ENCODE measurements at regions of chr15 and their contacts with region 1.

Region 1: GRCh38 chr15:42533246-42533645 is 15.3 kb downstream of the LRRC57 start:
- DNase-seq: no peak
- H3K4me3 ChIP-seq: no peak overlapping the region
- H3K27ac ChIP-seq: no peak overlapping the region
- H3K4me1 ChIP-seq: no peaks in the 10 kb centered on the region
- H3K27me3 ChIP-seq: no peaks in the 10 kb centered on the region
- CTCF ChIP-seq: no peak

Region 2: GRCh38 chr15:42427429-42428223 is 105.6 kb before region 1 on chr15:
- CTCF ChIA-PET with region 1: no interaction called
- POLR2A ChIA-PET with region 1: no interaction called
- intact Hi-C with region 1: no loop called
- DNase-seq: peak; percentile 12
- H3K4me3 ChIP-seq: no peak overlapping the region
- H3K27ac ChIP-seq: no peak overlapping the region
- H3K4me1 ChIP-seq: no peaks in the 10 kb centered on the region
- H3K27me3 ChIP-seq: no peaks in the 10 kb centered on the region
- CTCF ChIP-seq: no peak

Region 3: GRCh38 chr15:42511010-42511396 is 22.2 kb before region 1 on chr15:
- CTCF ChIA-PET with region 1: no interaction called
- POLR2A ChIA-PET with region 1: interaction called, 10 read pairs
- intact Hi-C with region 1: no loop called
- DNase-seq: no peak
- H3K4me3 ChIP-seq: no peak overlapping the region
- H3K27ac ChIP-seq: no peak overlapping the region
- H3K4me1 ChIP-seq: no peaks in the 10 kb centered on the region
- H3K27me3 ChIP-seq: no peaks in the 10 kb centered on the region
- CTCF ChIP-seq: no peak

Region 4: DNA sequence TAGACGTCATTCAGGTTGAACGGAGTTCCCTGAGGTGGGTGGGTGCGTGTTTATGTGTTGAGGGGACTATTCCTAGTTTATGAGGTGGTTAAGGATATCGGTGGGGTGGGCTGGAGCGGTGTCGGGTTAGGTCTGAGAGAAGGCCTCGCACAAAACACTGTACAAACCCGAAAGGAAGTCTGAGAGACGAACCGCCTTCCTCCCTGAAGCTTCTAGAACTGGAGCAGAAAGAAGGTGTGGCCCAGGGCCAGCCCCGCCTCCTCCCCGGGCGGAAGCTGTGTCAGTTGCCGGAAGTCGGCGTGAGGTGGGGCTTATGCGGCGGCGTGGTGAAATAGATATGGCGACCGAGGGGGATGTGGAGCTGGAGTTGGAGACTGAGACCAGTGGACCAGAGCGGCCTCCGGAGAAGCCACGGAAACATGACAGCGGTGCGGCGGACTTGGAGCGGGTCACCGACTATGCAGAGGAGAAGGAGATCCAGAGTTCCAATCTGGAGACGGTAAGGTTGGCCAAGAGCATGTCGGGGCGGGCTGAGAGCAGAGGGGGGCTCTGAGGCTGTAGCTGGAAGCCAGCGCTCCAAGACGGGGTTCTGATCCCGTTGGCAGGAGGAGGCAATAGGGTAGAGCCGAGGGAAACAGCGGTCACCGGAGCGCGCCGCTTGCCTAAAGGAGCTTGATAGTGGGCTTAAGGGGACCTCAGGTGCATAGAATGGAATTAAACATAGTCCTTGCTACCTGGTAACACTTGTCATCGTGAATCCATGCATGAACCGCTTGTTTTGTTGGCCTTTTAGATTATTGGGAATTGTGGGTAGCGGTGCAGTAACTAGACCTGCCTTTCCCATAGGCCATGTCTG is 1267.3 kb after region 1 on chr15 and contains the start of gene HYPK:
- CTCF ChIA-PET with region 1: no interaction called
- POLR2A ChIA-PET with region 1: no interaction called
- intact Hi-C with region 1: no loop called
- DNase-seq: peak; percentile 92
- H3K4me3 ChIP-seq: peak within 1 kb of the TSS; percentile 82
- H3K27ac ChIP-seq: peak within 1 kb of the TSS; percentile 67
- H3K4me1 ChIP-seq: no peaks in the 10 kb centered on the region
- H3K27me3 ChIP-seq: no peaks in the 10 kb centered on the region
- CTCF ChIP-seq: no peak
- total RNA-seq, gene HYPK: 33.6 and 34.9 TPM in 2 replicates